SK-N-SH (cell line): ENCODE measurements at regions of chr2 and their contacts with region 1.

Region 1: GRCh38 chr2:31333527-31334183 is 80.9 kb downstream of the XDH start:
- DNase-seq: peak; percentile 82
- H3K4me3 ChIP-seq: no peak overlapping the region; a peak in 1 of 4 replicates
- H3K27ac ChIP-seq: peak overlapping the region in 1 of 2 experiments; percentile 43; a peak in 2 of 4 replicates
- H3K4me1 ChIP-seq: peaks cover 25 to 42% of the 10 kb centered on the region in 2 experiments; a peak in 3 of 4 replicates
- H3K27me3 ChIP-seq: no peaks in the 10 kb centered on the region
- CTCF ChIP-seq: peak; percentile 100
- EP300 ChIP-seq: peak in 1 of 2 experiments; percentile 50; a peak in 2 of 4 replicates
- RAD21 ChIP-seq: peak; percentile 100

Region 2: GRCh38 chr2:30165050-30165520 is 1168.6 kb before region 1 on chr2:
- CTCF ChIA-PET with region 1: interaction called, 13 read pairs
- POLR2A ChIA-PET with region 1: no interaction called
- DNase-seq: peak; percentile 88
- H3K4me3 ChIP-seq: no peak overlapping the region; a peak in 1 of 4 replicates
- H3K27ac ChIP-seq: no peak overlapping the region
- H3K4me1 ChIP-seq: peaks cover 2 to 9% of the 10 kb centered on the region in 2 experiments; a peak in 3 of 4 replicates
- H3K27me3 ChIP-seq: no peaks in the 10 kb centered on the region
- CTCF ChIP-seq: peak; percentile 99
- EP300 ChIP-seq: peak in 1 of 2 experiments; percentile 26; a peak in 1 of 4 replicates
- RAD21 ChIP-seq: peak; percentile 97

Region 3: GRCh38 chr2:31112544-31112943 is 221.1 kb before region 1 on chr2:
- CTCF ChIA-PET with region 1: no interaction called
- POLR2A ChIA-PET with region 1: no interaction called
- DNase-seq: no peak
- H3K4me3 ChIP-seq: no peak overlapping the region
- H3K27ac ChIP-seq: no peak overlapping the region
- H3K4me1 ChIP-seq: peaks cover 0 to 32% of the 10 kb centered on the region in 2 experiments; a peak in 2 of 4 replicates
- H3K27me3 ChIP-seq: no peaks in the 10 kb centered on the region
- CTCF ChIP-seq: no peak
- EP300 ChIP-seq: no peak
- RAD21 ChIP-seq: no peak

Region 4: DNA sequence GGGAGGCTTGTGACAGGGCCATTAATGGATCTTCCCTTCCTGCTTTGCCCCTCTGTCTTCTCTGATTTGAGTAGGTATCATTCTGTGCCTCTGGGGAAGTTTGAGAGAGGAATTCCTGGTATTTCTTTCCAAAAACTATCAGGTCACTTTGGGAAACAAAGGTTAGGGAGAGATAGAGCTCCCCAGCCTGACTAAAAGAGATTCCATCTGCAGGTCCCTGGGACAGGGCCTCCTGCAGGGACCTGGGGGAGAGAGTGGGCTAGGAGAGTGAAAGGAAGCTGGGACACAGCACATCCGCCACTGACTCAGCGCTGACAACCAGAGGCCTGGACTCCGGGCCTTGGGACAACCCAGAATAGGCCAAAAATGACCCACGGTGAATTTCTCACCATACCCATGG is 201.8 kb before region 1 on chr2:
- CTCF ChIA-PET with region 1: interaction called, 93 read pairs
- POLR2A ChIA-PET with region 1: no interaction called
- DNase-seq: no peak
- H3K4me3 ChIP-seq: no peak overlapping the region
- H3K27ac ChIP-seq: no peak overlapping the region
- H3K4me1 ChIP-seq: peaks cover 0 to 35% of the 10 kb centered on the region in 2 experiments; a peak in 2 of 4 replicates
- H3K27me3 ChIP-seq: peaks cover 30% of the 10 kb centered on the region
- CTCF ChIP-seq: no peak
- EP300 ChIP-seq: no peak
- RAD21 ChIP-seq: no peak

Region 5: DNA sequence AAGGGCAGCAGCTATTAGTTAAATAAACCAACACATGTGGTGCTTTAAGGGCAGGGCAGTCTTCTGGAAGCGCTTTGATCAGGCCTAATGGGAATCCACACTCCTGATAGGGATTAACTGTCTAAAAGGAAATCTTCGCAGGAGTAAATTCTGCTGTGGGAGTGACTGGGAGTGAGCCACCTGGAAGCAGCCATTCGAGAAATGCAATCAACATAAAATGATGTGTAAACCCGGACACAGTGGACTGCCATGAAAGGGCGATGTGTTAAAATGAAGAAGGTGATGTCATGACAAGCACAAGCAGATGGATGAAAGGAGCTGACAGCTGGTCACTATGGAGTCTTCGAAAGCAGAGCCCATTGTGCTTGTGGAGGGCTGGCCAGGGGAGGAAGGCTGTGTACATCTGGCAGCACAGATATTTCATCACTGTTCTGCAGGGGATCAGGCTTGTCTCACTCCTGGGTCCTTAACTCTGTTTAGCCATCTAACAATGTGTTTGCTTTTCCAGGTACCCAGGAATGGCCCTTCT is 170.6 kb before region 1 on chr2:
- CTCF ChIA-PET with region 1: interaction called, 214 read pairs
- POLR2A ChIA-PET with region 1: no interaction called
- DNase-seq: no peak
- H3K4me3 ChIP-seq: no peak overlapping the region
- H3K27ac ChIP-seq: no peak overlapping the region
- H3K4me1 ChIP-seq: peaks cover 0 to 6% of the 10 kb centered on the region in 2 experiments; a peak in 1 of 4 replicates
- H3K27me3 ChIP-seq: no peaks in the 10 kb centered on the region; the same call in 1 of the 2 replicates
- CTCF ChIP-seq: no peak
- EP300 ChIP-seq: no peak
- RAD21 ChIP-seq: no peak

Region 6: GRCh38 chr2:31227711-31228125 is 105.9 kb before region 1 on chr2:
- CTCF ChIA-PET with region 1: interaction called, 185 read pairs
- POLR2A ChIA-PET with region 1: no interaction called
- DNase-seq: no peak
- H3K4me3 ChIP-seq: no peak overlapping the region
- H3K27ac ChIP-seq: no peak overlapping the region
- H3K4me1 ChIP-seq: no peaks in the 10 kb centered on the region
- H3K27me3 ChIP-seq: peaks cover 11% of the 10 kb centered on the region; the same call in 1 of the 2 replicates
- CTCF ChIP-seq: no peak
- EP300 ChIP-seq: no peak
- RAD21 ChIP-seq: no peak

Region 7: DNA sequence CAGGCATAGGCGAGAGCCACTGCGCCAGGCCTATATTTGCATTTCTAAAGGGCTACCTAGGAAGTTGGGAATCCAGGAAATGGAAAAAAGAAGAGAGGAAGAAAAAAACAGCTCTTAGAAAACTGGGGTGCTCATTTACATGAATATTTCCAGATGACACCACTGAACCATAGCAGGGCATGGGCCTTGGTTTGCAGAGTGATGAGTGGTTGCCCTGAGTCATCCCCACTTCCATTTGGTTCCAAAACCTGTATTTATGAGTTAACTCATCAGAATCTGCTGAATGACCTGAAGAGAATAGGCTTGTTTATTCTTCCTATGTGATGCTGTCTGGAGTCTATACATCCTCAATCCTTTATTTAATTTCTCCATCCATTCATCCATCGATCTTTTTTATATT is 63.5 kb before region 1 on chr2:
- CTCF ChIA-PET with region 1: interaction called, 14 read pairs
- POLR2A ChIA-PET with region 1: no interaction called
- DNase-seq: no peak
- H3K4me3 ChIP-seq: no peak overlapping the region
- H3K27ac ChIP-seq: 0 out of 4 replicates have a peak overlapping the region, but pooled peaks of 1 of the 2 experiments have one; percentile 13
- H3K4me1 ChIP-seq: peaks cover 8 to 10% of the 10 kb centered on the region in 2 experiments; a peak in 2 of 4 replicates
- H3K27me3 ChIP-seq: no peaks in the 10 kb centered on the region
- CTCF ChIP-seq: no peak
- EP300 ChIP-seq: no peak
- RAD21 ChIP-seq: no peak

Region 8: DNA sequence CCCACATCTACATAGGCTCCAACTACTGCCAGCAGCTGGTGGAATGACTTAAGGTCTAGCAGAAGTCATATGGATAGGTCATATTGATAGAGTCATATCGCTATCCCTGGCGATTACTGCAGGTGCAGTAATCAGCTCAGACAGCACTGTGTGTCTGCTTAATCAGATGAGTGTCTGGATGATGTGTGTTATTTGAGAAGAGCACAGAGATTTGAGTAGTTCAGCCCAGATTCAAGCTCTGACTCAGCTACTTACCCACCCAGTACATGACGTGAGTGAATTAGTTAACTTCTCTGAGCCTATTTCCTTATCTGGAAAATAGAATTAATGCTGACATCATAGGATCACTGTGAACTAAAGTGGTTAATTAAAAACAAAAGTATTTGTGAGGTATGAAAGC is 20.8 kb before region 1 on chr2:
- CTCF ChIA-PET with region 1: interaction called, 29 read pairs
- POLR2A ChIA-PET with region 1: no interaction called
- DNase-seq: no peak
- H3K4me3 ChIP-seq: no peak overlapping the region
- H3K27ac ChIP-seq: peak overlapping the region in 1 of 2 experiments; percentile 12; a peak in 1 of 4 replicates
- H3K4me1 ChIP-seq: peaks cover 0 to 18% of the 10 kb centered on the region in 2 experiments; a peak in 1 of 4 replicates
- H3K27me3 ChIP-seq: no peaks in the 10 kb centered on the region
- CTCF ChIP-seq: no peak
- EP300 ChIP-seq: no peak
- RAD21 ChIP-seq: no peak

Region 9: GRCh38 chr2:31475692-31476091 is 142.0 kb after region 1 on chr2:
- CTCF ChIA-PET with region 1: no interaction called
- POLR2A ChIA-PET with region 1: no interaction called
- DNase-seq: no peak
- H3K4me3 ChIP-seq: no peak overlapping the region
- H3K27ac ChIP-seq: peak overlapping the region in 1 of 2 experiments; percentile 71; a peak in 2 of 4 replicates
- H3K4me1 ChIP-seq: peaks cover 0 to 6% of the 10 kb centered on the region in 2 experiments; a peak in 1 of 4 replicates
- H3K27me3 ChIP-seq: no peaks in the 10 kb centered on the region
- CTCF ChIP-seq: no peak
- EP300 ChIP-seq: peak in 1 of 2 experiments; percentile 46; a peak in 1 of 4 replicates
- RAD21 ChIP-seq: no peak